PC-9 (cell line): ENCODE measurements at regions of chr9 and their contacts with region 1.

Region 1: GRCh38 chr9:15510789-15511575 is at the start of gene PSIP1:
- DNase-seq: peak; percentile 52 to 64
- H3K4me3 ChIP-seq: peak within 1 kb of the TSS; percentile 68
- H3K27ac ChIP-seq: peak within 1 kb of the TSS; percentile 91
- H3K4me1 ChIP-seq: peaks cover 22% of the 10 kb centered on the region
- H3K27me3 ChIP-seq: no peaks in the 10 kb centered on the region
- CTCF ChIP-seq: no peak
- total RNA-seq, gene PSIP1: 65.3 and 67.8 TPM in 2 replicates

Region 2: DNA sequence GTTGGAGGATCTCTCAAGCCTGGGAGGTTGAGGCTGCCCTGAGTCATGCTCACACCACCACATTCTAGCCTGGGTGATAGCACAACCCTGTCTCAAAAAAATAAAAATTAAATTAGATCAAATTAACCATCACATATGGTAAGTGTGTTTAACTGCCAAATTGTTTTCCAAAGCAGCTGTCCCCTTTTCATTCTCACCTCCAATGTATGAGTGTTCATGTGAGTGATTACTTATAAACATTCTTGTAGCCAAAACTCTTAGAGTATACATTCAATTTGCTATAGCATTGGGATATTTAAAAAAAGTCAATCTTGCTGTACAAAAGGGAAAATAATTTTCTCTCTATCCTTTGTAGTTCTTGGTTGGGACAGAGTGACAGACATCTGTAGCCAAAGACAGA is 141.7 kb before region 1 on chr9:
- CTCF ChIA-PET with region 1: no interaction called
- POLR2A ChIA-PET with region 1: no interaction called
- intact Hi-C with region 1: no loop called
- DNase-seq: no peak
- H3K4me3 ChIP-seq: no peak overlapping the region
- H3K27ac ChIP-seq: no peak overlapping the region
- H3K4me1 ChIP-seq: no peaks in the 10 kb centered on the region; the same call in 1 of the 2 replicates
- H3K27me3 ChIP-seq: no peaks in the 10 kb centered on the region
- CTCF ChIP-seq: no peak

Region 3: GRCh38 chr9:15552636-15553527 is 41.9 kb after region 1 on chr9 and contains the start of gene CCDC171:
- CTCF ChIA-PET with region 1: no interaction called
- POLR2A ChIA-PET with region 1: interaction called, 7 read pairs
- intact Hi-C with region 1: loop called (anchors 2 kb)
- DNase-seq: peak; percentile 84 to 86
- H3K4me3 ChIP-seq: peak within 1 kb of the TSS; percentile 67
- H3K27ac ChIP-seq: peak within 1 kb of the TSS; percentile 26; the same call in 1 of the 2 replicates
- H3K4me1 ChIP-seq: 0 out of 2 replicates have a peak, but pooled peaks cover 9% of the 10 kb centered on the region
- H3K27me3 ChIP-seq: no peaks in the 10 kb centered on the region
- CTCF ChIP-seq: no peak
- total RNA-seq, gene CCDC171: 2.4 and 2.5 TPM in 2 replicates

Region 4: GRCh38 chr9:15824310-15824709 is 313.3 kb after region 1 on chr9:
- CTCF ChIA-PET with region 1: no interaction called
- POLR2A ChIA-PET with region 1: no interaction called
- intact Hi-C with region 1: loop called (anchors 5 kb)
- DNase-seq: peak in 1 of 2 experiments; percentile 23
- H3K4me3 ChIP-seq: no peak overlapping the region
- H3K27ac ChIP-seq: no peak overlapping the region
- H3K4me1 ChIP-seq: no peaks in the 10 kb centered on the region
- H3K27me3 ChIP-seq: no peaks in the 10 kb centered on the region
- CTCF ChIP-seq: peak; percentile 41; the same call in 1 of the 2 replicates